HCT116 (cell line): ENCODE measurements at regions of chr3 and their contacts with region 1.

Region 1: DNA sequence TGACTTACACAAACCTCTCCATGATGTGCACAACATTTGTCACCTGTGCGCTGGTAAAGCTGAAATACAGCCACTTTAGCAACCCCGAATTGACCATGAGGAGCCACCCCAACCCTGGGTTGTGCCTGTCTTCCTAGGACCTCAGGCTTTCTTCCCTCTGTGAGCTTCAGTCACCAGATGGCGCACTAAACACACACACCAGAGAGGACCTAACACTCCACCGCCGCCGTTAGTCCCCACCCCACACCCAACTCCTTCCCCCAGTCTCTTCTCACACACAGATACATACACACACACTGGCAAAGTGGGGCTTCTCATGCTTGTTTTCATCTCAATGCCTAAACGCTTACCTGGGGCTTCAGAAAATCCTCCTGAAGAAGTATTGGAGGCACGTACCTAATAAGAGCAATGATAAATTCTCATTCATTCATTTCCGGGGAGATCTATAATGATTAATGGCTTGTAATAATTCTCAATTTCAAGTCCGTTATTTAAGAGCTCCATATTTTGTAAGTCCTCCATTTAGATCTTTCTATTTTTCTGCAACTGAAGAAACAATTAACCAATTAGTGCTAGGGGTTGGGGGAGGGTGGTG is 2.1 kb upstream of the CCDC80 start:
- DNase-seq: peak; percentile 77
- ATAC-seq: peak; percentile 99
- H3K4me3 ChIP-seq: peak overlapping the region; percentile 1 to 4; a peak in 1 of 4 replicates
- H3K27ac ChIP-seq: no peak overlapping the region
- H3K4me1 ChIP-seq: peaks cover 0 to 21% of the 10 kb centered on the region in 2 experiments; a peak in 3 of 4 replicates
- H3K27me3 ChIP-seq: no peaks in the 10 kb centered on the region
- CTCF ChIP-seq: peak; percentile 82 to 94 (median 84)
- POLR2A ChIP-seq: no peak
- RAD21 ChIP-seq: peak; percentile 97

Region 2: DNA sequence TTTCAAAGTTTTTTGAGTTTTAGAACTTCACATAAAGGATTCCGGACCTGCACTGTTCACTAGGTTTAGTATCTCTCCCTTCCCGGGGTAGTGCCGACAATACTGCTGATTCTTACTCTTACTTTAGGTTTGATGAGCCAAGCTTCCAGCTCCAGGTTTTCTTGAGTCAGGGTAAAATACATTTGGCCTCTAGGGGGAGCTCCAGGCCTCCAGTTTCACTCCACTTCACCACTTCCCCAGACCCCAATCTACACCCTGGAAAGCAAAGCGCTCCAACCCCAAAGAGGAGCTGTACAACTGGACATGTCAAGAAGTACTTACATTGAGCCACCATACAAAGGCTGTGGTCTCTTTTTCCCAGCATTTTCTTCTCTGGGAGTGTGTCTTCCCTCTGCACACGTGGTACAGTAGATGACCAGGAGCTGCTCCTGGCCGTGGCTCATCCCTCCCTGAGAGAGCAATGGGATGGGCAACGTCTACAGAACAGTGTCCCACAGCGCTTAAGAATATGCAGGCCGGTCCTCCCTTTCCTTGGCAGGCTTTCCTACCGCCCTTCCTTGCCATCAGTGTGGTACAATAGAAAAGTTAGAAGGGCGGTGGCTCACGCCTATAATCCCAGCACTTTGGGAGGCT is 91.8 kb after region 1 on chr3:
- CTCF ChIA-PET with region 1: interaction called, 27 read pairs
- POLR2A ChIA-PET with region 1: no interaction called
- RAD21 ChIA-PET with region 1: interaction called in 1 of 2 experiments, 8 read pairs
- intact Hi-C with region 1: loop called (anchors 2 kb)
- DNase-seq: peak; percentile 77
- ATAC-seq: peak; percentile 93
- H3K4me3 ChIP-seq: peak overlapping the region; percentile 13 to 27; a peak in 2 of 4 replicates
- H3K27ac ChIP-seq: no peak overlapping the region
- H3K4me1 ChIP-seq: peaks cover 0 to 7% of the 10 kb centered on the region in 2 experiments; a peak in 2 of 4 replicates
- H3K27me3 ChIP-seq: no peaks in the 10 kb centered on the region
- CTCF ChIP-seq: peak; percentile 65 to 91 (median 74)
- POLR2A ChIP-seq: no peak
- RAD21 ChIP-seq: peak; percentile 78

Region 3: DNA sequence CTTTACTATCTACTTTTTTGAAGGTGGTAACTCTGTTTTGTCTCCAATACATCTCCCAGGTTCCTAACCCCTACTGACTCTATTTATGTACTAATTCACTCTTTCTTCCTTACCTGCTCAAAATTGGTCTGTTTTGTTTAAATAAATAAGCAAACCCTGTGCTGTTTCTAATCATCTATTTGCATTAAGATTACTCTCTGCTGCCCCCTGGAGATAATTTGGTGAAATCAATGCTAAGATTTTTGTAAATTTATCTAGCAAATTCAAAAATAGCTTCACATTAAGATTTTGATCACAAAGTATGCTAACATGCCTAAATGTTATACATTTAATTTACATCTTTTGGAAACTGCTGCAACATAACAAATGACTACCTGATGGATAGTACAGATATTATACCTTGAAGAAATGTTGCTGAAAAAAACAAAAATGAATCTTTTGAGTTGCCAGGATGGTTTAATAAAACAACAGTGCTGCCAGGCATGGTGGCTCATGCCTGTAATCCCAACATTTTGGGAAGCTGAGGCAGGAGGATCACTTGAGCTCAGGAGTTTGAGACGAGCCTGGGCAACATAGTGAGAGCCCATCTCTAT is 336.3 kb after region 1 on chr3:
- CTCF ChIA-PET with region 1: interaction called, 23 read pairs
- POLR2A ChIA-PET with region 1: interaction called, 4 read pairs
- RAD21 ChIA-PET with region 1: interaction called in 1 of 2 experiments, 4 read pairs
- intact Hi-C with region 1: loop called (anchors 1 kb)
- DNase-seq: peak; percentile 13
- ATAC-seq: peak; percentile 34; the same call in 1 of the 2 replicates
- H3K4me3 ChIP-seq: no peak overlapping the region
- H3K27ac ChIP-seq: no peak overlapping the region
- H3K4me1 ChIP-seq: no peaks in the 10 kb centered on the region
- H3K27me3 ChIP-seq: no peaks in the 10 kb centered on the region
- CTCF ChIP-seq: peak; percentile 42 to 77 (median 66); a peak in 5 of 6 replicates
- POLR2A ChIP-seq: no peak
- RAD21 ChIP-seq: peak; percentile 69

Region 4: DNA sequence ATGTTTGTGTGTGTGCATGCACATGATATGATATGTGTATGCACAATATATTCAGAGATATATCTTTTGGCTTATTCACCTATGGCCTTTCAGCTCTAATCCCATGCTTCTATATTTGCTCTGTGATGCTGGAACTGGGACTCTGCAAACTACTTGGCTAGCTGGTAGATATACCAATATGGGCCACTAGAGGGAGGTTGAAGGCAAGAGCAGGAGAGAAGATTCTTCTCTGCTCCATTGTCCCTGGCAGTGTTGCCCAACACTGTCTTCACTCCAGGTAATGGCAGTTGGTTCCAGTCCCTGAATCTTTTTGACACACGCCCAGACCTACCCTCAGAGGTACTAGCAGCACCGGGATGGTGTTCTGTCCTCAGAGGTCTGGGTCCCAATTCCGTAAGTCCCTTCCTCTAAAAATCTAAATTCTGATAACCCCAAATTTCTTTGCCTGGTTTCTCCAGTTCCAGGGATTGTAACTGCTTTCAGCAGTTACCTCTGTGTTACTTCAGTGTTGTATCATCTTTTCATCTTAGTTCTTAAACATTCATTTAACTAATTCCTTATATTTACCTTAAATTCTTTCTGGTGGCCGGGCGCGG is 392.5 kb after region 1 on chr3:
- CTCF ChIA-PET with region 1: interaction called, 6 read pairs
- POLR2A ChIA-PET with region 1: no interaction called
- RAD21 ChIA-PET with region 1: no interaction called
- intact Hi-C with region 1: loop called (anchors 10 kb)
- DNase-seq: peak; percentile 50
- ATAC-seq: peak; percentile 99
- H3K4me3 ChIP-seq: no peak overlapping the region
- H3K27ac ChIP-seq: no peak overlapping the region
- H3K4me1 ChIP-seq: no peaks in the 10 kb centered on the region
- H3K27me3 ChIP-seq: no peaks in the 10 kb centered on the region
- CTCF ChIP-seq: peak; percentile 49 to 89 (median 82); a peak in 5 of 6 replicates
- POLR2A ChIP-seq: no peak
- RAD21 ChIP-seq: peak; percentile 62

Region 5: GRCh38 chr3:113626503-113627371 is 983.7 kb after region 1 on chr3:
- CTCF ChIA-PET with region 1: no interaction called
- POLR2A ChIA-PET with region 1: no interaction called
- RAD21 ChIA-PET with region 1: no interaction called
- intact Hi-C with region 1: loop called (anchors 10 kb)
- DNase-seq: peak; percentile 79
- ATAC-seq: peak; percentile 99
- H3K4me3 ChIP-seq: peak overlapping the region; percentile 6 to 21; a peak in 1 of 4 replicates
- H3K27ac ChIP-seq: no peak overlapping the region
- H3K4me1 ChIP-seq: peaks cover 0 to 9% of the 10 kb centered on the region in 2 experiments; a peak in 1 of 4 replicates
- H3K27me3 ChIP-seq: no peaks in the 10 kb centered on the region
- CTCF ChIP-seq: peak; percentile 88 to 98 (median 95)
- POLR2A ChIP-seq: no peak
- RAD21 ChIP-seq: peak; percentile 92